Activated CD4-positive, alpha-beta T cell treated with anti-CD3 and anti-CD28 coated beads, Interleukin-2, amount 10 ng/mL, durations not matched to agents 24 days and 14 days (primary cell): ENCODE measurements at regions of chr10 and their contacts with region 1.

Region 1: GRCh38 chr10:63465293-63466143 is at the start of gene JMJD1C:
- DNase-seq: peak; percentile 88
- H3K4me3 Mint-ChIP-seq: peak within 1 kb of the TSS; percentile 93
- H3K27ac Mint-ChIP-seq: peak within 1 kb of the TSS; percentile 67
- H3K4me1 Mint-ChIP-seq: peaks cover 17% of the 10 kb centered on the region
- H3K27me3 Mint-ChIP-seq: peaks cover 24% of the 10 kb centered on the region
- total RNA-seq, gene JMJD1C: 41.7 and 42.0 TPM in 2 replicates

Region 2: DNA sequence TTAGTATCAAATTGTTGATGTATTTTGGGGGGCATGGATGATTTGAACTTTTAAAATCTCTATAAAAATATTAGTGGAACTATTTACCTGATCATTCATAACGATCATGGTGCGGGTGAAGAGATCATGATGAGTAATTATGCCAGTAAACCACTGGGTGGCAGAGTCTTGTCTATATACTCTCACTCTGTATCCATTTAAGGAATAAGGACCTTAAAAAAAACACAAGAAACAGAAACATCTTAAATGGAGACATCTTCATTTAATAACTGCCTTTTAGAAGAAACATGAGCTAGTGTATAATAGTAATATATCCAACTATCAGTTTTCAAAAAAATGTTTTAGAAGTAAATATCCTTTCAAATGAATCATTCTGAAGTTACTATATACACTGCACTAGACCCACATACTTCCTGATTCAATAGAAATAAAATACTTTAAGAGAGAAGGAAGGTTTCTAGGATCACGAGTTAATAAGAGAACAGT is 248.4 kb before region 1 on chr10:
- intact Hi-C with region 1: loop called (anchors 2 kb)
- DNase-seq: peak; percentile 75
- H3K4me3 Mint-ChIP-seq: peak overlapping the region; percentile 15
- H3K27ac Mint-ChIP-seq: no peak overlapping the region
- H3K4me1 Mint-ChIP-seq: peaks cover 46% of the 10 kb centered on the region
- H3K27me3 Mint-ChIP-seq: no peaks in the 10 kb centered on the region

Region 3: DNA sequence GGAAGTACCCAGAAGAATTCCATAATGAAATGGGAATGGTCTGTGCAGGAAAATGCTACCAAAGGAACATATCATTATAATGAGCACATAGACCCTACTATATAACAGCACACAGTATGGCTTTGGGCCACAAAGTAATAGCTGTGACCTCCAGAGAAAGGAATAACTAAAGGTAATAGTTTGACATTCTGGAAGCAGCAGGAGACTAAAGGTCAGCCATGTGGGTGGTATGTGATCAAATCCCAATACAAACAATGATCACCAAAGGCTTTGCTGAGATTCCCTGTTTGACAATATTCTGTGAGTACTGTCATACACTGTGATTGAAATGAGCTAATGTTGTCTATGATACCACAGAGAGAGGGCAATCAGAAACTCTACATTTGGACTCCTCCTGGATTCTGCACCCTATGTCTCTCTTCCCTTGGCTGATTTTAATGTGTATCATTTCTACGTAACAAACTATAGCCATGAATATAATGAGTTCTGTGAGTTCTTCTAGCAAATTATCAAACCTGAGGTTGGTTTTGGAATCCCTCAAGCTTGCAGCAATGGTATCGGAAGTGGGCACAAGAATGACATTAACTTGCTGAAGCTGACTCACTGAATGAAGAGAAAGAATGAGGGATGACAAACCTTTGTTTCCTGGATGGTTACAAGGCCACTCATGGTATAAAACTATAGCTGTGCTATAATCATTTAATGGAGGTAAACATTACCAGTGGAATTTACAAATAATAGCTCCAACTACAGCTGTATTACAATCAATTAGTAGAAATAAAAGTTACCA is 99.3 kb before region 1 on chr10:
- intact Hi-C with region 1: no loop called
- DNase-seq: no peak
- H3K4me3 Mint-ChIP-seq: no peak overlapping the region
- H3K27ac Mint-ChIP-seq: no peak overlapping the region
- H3K4me1 Mint-ChIP-seq: peaks cover 2% of the 10 kb centered on the region
- H3K27me3 Mint-ChIP-seq: no peaks in the 10 kb centered on the region

Region 4: GRCh38 chr10:63454631-63455030 is 10.9 kb before region 1 on chr10:
- intact Hi-C with region 1: no loop called
- DNase-seq: no peak
- H3K4me3 Mint-ChIP-seq: no peak overlapping the region
- H3K27ac Mint-ChIP-seq: no peak overlapping the region
- H3K4me1 Mint-ChIP-seq: peaks cover 2% of the 10 kb centered on the region
- H3K27me3 Mint-ChIP-seq: no peaks in the 10 kb centered on the region

Region 5: DNA sequence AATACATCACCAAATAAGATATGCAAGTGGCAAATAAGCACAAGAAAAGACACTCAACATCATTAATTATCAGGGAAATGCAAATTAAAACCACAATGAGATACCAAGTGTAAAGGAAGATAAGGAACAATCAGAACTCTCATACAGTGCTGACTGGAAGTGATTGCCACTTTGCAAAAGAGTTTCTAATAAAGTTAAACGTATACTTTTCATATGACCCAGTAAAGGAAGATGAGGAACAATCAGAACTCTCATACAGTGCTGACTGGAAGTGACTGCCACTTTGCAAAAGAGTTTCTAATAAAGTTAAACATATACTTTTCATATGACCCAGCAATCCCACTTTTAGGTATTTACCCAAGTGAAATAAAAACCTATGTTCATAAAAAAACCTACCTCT is 12.4 kb after region 1 on chr10:
- intact Hi-C with region 1: loop called (anchors 1 kb)
- DNase-seq: no peak
- H3K4me3 Mint-ChIP-seq: no peak overlapping the region
- H3K27ac Mint-ChIP-seq: no peak overlapping the region
- H3K4me1 Mint-ChIP-seq: peaks cover 9% of the 10 kb centered on the region
- H3K27me3 Mint-ChIP-seq: no peaks in the 10 kb centered on the region

Region 6: DNA sequence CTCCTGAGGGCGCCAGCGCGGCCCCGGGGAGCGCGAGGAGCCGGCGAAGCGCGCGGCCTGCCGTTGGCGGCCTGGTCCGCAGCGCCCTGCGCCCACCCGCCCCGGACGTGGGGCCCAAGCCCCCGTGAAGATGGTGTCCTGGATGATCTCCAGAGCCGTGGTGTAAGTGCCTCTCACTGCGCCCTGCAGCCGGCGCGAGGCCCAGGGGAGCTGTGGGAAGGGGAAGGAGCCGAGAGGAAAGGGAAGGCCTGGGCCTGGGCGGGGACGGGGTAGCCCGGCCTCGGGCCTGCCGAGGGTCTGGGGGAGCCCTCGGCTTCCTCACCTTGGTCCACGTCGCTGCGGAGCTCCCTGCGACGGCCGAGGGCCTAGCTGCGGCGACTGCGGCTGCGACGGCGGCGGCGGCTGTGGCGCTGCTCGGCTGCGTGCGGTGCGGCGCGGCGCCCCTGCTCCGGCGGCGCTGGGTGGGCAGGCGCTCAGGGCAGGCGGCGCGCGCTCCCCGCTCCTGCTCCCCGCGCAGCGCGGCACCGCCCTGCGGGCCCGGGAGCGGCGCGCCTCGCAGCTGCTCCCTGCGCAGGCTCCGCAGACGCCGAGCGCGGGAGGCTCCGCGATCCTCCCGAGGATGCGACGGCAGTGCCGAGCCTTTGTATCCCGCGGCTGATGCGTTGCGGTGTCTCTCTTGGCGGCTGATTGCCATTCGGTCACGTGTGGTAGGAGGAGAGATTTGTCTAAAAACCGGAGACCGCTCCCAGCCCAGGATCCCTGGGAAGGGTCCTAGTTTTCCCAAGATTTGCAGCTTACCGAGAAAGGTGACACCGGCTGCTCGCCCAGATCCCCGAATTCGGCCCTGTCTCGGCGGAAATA is 56.1 kb after region 1 on chr10:
- intact Hi-C with region 1: loop called (anchors 2 kb)
- DNase-seq: peak; percentile 87
- H3K4me3 Mint-ChIP-seq: peak overlapping the region; percentile 91
- H3K27ac Mint-ChIP-seq: peak overlapping the region; percentile 94
- H3K4me1 Mint-ChIP-seq: peaks cover 52% of the 10 kb centered on the region
- H3K27me3 Mint-ChIP-seq: no peaks in the 10 kb centered on the region

Region 7: GRCh38 chr10:63720072-63720537 is 254.6 kb after region 1 on chr10:
- intact Hi-C with region 1: loop called (anchors 5 kb)
- DNase-seq: peak; percentile 85
- H3K4me3 Mint-ChIP-seq: peak overlapping the region; percentile 60
- H3K27ac Mint-ChIP-seq: no peak overlapping the region
- H3K4me1 Mint-ChIP-seq: peaks cover 22% of the 10 kb centered on the region
- H3K27me3 Mint-ChIP-seq: peaks cover 8% of the 10 kb centered on the region